OCI-LY7 (cell line): ENCODE measurements at regions of chr1 and their contacts with region 1.

Region 1: DNA sequence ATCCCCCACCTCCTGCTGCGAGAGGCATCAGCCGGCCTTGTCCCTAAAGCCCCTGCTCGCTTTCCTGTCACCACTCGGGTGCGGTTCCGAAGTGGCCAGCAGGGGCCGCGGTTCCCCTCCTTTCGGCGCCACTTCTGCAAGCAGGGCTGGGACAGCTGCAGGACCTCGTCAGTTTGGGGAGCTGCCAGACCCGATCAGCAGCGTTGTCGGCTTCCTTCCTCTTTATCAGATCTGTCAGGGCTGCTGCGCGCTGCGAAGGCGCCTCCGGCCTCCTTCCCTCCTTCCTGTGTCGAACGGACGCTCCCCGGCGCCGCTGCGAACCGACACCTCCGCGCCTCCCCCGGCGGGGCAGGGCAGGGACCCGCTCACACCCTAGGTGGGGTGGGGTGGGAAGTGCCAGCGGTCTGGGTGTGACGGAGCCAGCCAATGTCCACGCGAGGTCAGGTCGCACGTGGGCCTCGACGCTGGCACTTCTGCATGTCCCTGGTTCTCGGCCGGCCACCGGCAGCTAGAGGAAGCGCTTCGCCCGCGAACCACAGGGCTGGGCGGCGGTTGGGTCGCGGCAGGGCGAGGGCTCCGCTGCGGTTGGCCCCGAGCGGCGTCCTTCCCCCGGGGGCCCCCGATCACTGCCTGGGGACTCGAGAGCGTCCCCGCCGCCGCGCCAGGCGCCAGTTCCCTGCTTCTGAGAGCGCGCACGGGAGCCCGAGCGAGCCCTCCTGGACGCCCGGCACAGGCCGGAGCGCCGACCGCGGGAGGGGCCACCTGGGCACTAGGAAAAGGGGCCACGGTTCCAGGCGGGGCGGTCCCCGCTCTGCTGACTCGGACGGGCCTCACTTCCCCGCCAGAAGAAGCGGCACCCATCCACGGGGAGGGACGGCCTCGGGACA is 81.8 kb downstream of the RUNX3 start:
- DNase-seq: peak; percentile 95
- H3K4me3 ChIP-seq: peak overlapping the region; percentile 52
- H3K27ac ChIP-seq: peak overlapping the region; percentile 24
- H3K4me1 ChIP-seq: peaks cover 19% of the 10 kb centered on the region
- CTCF ChIP-seq: peak; percentile 87

Region 2: GRCh38 chr1:24897767-24898483 is 49.7 kb after region 1 on chr1:
- CTCF ChIA-PET with region 1: no interaction called
- POLR2A ChIA-PET with region 1: no interaction called
- intact Hi-C with region 1: loop called (anchors 1 kb)
- DNase-seq: peak; percentile 49
- H3K4me3 ChIP-seq: no peak overlapping the region
- H3K27ac ChIP-seq: no peak overlapping the region
- H3K4me1 ChIP-seq: no peaks in the 10 kb centered on the region
- CTCF ChIP-seq: peak; percentile 79

Region 3: DNA sequence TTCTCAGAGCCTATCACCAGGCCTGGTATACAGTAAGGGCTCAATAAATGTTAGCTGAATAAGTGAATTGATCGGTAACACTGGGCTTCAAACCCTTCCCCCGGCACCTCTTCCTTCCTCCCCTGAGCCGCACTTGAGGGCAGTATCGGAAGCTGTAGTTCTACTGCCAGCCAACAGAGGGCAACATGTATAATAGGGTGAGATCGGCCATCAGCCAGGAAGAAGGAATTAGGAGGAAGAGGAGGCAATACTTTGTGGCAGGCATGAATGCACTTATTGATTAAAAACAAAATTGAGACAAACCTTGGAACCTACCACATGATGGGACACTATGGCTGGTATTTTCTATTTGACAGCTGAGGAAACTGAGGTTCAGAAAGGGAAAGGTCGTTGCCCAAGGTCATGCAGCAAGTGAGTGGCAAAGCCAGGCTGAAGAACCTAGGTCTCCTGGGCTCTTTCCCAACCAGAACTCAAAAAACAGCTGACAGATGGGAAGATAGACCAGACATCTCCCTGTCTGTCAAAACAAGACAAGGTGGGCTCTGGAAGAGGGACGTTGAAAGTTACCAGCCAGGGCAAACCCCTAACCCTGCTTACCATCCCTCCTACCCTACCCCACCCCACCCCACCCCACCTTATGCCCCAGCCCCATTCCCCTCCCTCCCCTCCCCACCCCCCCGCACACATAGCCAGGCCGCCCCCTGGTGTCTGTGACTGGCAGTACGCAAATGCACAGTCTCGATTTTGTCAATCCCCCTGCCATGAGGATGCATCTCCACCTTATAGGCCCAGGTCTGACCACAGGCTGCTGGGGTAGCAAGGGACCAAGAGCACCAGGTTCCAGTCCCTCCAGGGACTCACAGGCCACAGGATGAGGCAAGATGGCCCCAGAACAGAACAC is 189.2 kb after region 1 on chr1:
- CTCF ChIA-PET with region 1: no interaction called
- POLR2A ChIA-PET with region 1: no interaction called
- intact Hi-C with region 1: loop called (anchors 1 kb)
- DNase-seq: peak; percentile 73
- H3K4me3 ChIP-seq: no peak overlapping the region
- H3K27ac ChIP-seq: no peak overlapping the region
- H3K4me1 ChIP-seq: peaks cover 24% of the 10 kb centered on the region
- CTCF ChIP-seq: peak; percentile 80

Region 4: GRCh38 chr1:25099343-25099951 is 251.2 kb after region 1 on chr1:
- CTCF ChIA-PET with region 1: interaction called, 3 read pairs
- POLR2A ChIA-PET with region 1: interaction called, 5 read pairs
- intact Hi-C with region 1: loop called (anchors 1 kb)
- DNase-seq: peak; percentile 13
- H3K4me3 ChIP-seq: no peak overlapping the region
- H3K27ac ChIP-seq: no peak overlapping the region
- H3K4me1 ChIP-seq: peaks cover 20% of the 10 kb centered on the region
- CTCF ChIP-seq: no peak

Region 5: DNA sequence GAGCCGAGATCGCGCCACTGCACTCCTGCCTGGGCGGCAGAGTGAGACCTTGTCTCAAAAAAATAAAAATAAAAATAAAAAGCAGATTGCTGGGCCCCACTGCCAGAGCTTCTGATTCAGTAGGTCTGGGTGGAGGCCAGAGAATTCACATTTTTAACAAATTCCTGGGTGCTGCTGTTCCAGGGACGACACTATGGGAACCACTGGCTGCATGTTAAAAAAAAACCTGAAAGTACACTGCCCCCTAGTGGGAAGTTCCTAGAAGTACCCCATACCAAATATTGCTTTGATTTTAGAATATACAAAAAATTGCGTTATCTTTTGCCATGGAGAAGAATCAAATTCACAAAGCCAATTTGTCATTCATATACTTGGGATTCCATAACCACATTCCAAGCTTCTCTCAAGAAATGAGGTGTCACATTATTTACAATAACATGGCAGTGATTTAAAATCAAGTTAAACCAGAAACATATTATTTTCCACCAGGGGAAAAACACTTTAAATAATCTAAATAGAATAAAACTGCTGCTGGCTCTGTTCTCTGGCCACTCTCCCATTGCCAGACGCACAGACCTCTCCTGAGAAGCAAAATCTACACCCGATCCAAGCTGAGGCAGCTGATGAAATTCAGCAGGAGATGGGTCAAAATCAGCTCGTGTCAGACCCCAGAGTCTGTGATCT is 356.7 kb after region 1 on chr1:
- CTCF ChIA-PET with region 1: no interaction called
- POLR2A ChIA-PET with region 1: no interaction called
- intact Hi-C with region 1: loop called (anchors 5 kb)
- DNase-seq: peak; percentile 71
- H3K4me3 ChIP-seq: no peak overlapping the region
- H3K27ac ChIP-seq: no peak overlapping the region
- H3K4me1 ChIP-seq: no peaks in the 10 kb centered on the region
- CTCF ChIP-seq: peak; percentile 97